CD8-positive, alpha-beta memory T cell (primary cell): ENCODE measurements at regions of chr17 and their contacts with region 1.

Region 1: GRCh38 chr17:64278614-64279013 is 15.6 kb upstream of the TEX2 start:
- DNase-seq: no peak
- H3K4me3 ChIP-seq: no peak overlapping the region
- H3K4me3 Mint-ChIP-seq: no peak overlapping the region
- H3K27ac ChIP-seq: no peak overlapping the region
- H3K27ac Mint-ChIP-seq: no peak overlapping the region
- H3K4me1 ChIP-seq: no peaks in the 10 kb centered on the region
- H3K4me1 Mint-ChIP-seq: no peaks in the 10 kb centered on the region
- H3K27me3 ChIP-seq: no peaks in the 10 kb centered on the region
- H3K27me3 Mint-ChIP-seq: peaks cover 0 to 2% of the 10 kb centered on the region in 2 donors

Region 2: DNA sequence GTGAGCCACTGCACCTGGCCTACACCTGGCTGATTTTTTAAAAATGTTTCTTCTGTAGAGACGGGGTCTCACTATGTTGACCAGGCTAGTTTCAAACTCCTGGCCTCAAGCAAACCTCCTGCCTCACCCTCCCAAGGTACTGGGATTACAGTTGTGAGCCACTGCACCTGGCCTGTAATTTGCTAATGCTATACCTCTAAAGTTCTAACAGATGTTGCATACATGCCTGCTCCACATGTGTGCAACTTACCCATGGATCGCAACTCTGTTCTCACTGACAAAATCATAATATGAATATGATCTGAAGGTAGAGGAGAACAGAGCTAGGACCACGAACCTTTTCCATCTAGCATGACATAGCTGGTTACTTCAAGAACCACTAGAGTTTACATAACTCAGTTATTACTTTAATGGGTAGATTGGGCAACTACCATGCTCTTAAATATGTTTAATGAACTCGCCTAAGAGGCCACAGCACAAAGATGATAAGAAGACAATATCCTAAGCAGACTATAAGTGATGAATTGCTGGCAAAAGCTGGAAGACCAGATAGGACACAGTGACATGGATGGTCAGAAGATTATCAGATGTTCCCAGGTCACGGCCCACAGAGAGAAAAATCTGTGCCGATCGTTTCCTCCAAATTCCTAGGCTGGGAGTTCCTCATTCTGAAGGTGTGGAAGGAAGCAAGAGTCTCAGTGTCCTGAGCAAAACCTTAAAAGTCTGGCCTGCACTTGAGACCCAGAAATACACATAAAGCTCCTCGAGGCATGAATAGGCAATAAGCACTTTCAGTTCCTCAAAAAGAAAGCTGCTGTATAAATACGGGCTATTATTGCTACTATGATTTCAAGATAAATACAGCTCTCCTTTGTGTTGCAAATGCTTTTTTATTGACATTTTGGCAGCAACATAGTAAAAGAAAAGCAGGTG is 204.6 kb before region 1 on chr17:
- CTCF ChIA-PET with region 1: no interaction called
- POLR2A ChIA-PET with region 1: interaction called, 10 read pairs
- DNase-seq: no peak
- H3K4me3 ChIP-seq: no peak overlapping the region
- H3K4me3 Mint-ChIP-seq: no peak overlapping the region
- H3K27ac ChIP-seq: no peak overlapping the region
- H3K27ac Mint-ChIP-seq: peak overlapping the region in 6 of 8 donors; percentile 10 to 84 (median 53)
- H3K4me1 ChIP-seq: no peaks in the 10 kb centered on the region
- H3K4me1 Mint-ChIP-seq: peaks cover 7 to 19% (median 19%) of the 10 kb centered on the region in 3 donors
- H3K27me3 ChIP-seq: no peaks in the 10 kb centered on the region
- H3K27me3 Mint-ChIP-seq: no peaks in the 10 kb centered on the region

Region 3: GRCh38 chr17:64399071-64399766 is 120.6 kb after region 1 on chr17:
- CTCF ChIA-PET with region 1: no interaction called
- POLR2A ChIA-PET with region 1: no interaction called
- DNase-seq: no peak
- H3K4me3 ChIP-seq: no peak overlapping the region
- H3K4me3 Mint-ChIP-seq: peak overlapping the region; percentile 20 to 80 (median 59)
- H3K27ac ChIP-seq: no peak overlapping the region
- H3K27ac Mint-ChIP-seq: peak overlapping the region in 7 of 8 donors; percentile 29 to 95 (median 54)
- H3K4me1 ChIP-seq: peaks cover 35% of the 10 kb centered on the region
- H3K4me1 Mint-ChIP-seq: peaks cover 47 to 69% (median 50%) of the 10 kb centered on the region in 3 donors
- H3K27me3 ChIP-seq: no peaks in the 10 kb centered on the region
- H3K27me3 Mint-ChIP-seq: no peaks in the 10 kb centered on the region

Region 4: GRCh38 chr17:64491034-64491859 is 212.6 kb after region 1 on chr17:
- CTCF ChIA-PET with region 1: no interaction called
- POLR2A ChIA-PET with region 1: no interaction called
- DNase-seq: peak; percentile 9 to 55 (median 33)
- H3K4me3 ChIP-seq: no peak overlapping the region
- H3K4me3 Mint-ChIP-seq: peak overlapping the region in 1 of 7 donors; percentile 46
- H3K27ac ChIP-seq: no peak overlapping the region
- H3K27ac Mint-ChIP-seq: peak overlapping the region in 1 of 8 donors; percentile 92
- H3K4me1 ChIP-seq: peaks cover 29% of the 10 kb centered on the region
- H3K4me1 Mint-ChIP-seq: peaks cover 24 to 39% (median 34%) of the 10 kb centered on the region in 3 donors
- H3K27me3 ChIP-seq: no peaks in the 10 kb centered on the region
- H3K27me3 Mint-ChIP-seq: no peaks in the 10 kb centered on the region